ENCODE measurements at regions of chr4 and their contacts with region 1.

Region 1: DNA sequence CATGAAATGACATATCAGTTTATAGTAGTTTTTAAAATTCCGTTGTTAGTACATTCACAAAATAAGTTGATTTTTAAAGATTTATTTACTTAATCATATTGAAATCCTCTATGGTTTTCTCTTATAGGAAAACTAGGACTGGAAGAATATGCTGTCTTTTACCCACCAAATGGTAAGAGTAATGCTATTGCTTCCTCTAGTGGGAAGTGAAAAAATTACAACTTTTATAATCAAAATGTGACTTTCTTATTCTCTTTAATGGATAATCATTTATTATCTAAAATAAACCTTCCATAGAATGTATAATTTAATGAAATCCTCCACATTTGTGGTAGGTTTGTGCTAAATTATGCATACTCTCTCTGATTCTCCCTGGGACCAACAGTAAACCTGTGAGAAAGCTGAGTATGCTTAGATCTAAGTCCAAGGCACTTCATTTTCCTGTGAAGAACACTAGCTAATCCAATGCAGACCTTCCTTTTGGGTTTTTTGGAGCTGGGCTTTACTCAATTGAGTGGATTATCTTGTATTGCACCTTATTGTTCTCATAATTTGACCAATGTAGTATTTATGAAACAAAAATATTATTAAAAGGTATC is 136.2 kb downstream of the TBC1D19 start:
- DNase-seq: no peak
- H3K4me3 ChIP-seq: no peak overlapping the region
- H3K27ac ChIP-seq: no peak overlapping the region
- H3K4me1 ChIP-seq: no peaks in the 10 kb centered on the region
- H3K27me3 ChIP-seq: no peaks in the 10 kb centered on the region
- CTCF ChIP-seq: peak; percentile 33 to 63 (median 46)
- POLR2A ChIP-seq: no peak

Region 2: DNA sequence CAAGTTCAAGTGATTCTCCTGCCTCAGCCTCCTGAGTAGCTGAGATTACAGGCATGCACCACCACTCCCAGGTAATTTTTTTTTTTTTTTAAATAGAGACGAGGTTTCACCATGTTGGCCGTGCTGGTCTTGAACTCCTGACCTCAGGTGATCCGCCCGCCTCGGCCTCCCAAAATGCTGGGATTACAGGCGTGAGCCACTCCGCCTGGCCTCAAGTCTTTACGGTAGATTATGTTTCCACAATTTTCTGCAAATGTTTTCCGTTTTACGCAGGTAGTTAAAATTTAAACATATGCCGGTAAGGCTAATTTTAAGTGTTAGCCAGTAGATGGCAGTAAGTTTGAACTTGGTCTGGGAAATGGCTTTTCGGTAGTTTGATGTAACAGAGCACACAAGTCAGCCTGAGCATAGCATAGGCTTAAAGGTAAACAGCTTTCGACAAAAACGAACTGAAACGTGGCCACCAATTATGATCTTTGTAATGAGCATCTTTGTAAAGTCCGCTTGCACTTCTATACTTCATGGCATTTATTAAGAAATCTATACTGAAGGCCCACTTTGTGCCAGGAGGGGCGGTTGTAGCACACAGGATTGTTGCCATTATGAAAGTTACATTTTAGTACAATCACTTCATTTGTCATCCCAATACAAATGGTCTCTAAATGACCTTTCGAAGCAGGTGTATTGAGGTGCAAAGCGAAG is 260.8 kb before region 1 on chr4:
- intact Hi-C with region 1: loop called (anchors 10 kb)
- DNase-seq: no peak
- H3K4me3 ChIP-seq: no peak overlapping the region
- H3K27ac ChIP-seq: peak overlapping the region; percentile 44 to 46
- H3K4me1 ChIP-seq: no peaks in the 10 kb centered on the region
- H3K27me3 ChIP-seq: no peaks in the 10 kb centered on the region
- CTCF ChIP-seq: peak; percentile 57 to 69 (median 62)
- POLR2A ChIP-seq: no peak